Sigmoid colon (tissue), 7 donors: ENCODE measurements at regions of chr5 and their contacts with region 1.

Region 1: DNA sequence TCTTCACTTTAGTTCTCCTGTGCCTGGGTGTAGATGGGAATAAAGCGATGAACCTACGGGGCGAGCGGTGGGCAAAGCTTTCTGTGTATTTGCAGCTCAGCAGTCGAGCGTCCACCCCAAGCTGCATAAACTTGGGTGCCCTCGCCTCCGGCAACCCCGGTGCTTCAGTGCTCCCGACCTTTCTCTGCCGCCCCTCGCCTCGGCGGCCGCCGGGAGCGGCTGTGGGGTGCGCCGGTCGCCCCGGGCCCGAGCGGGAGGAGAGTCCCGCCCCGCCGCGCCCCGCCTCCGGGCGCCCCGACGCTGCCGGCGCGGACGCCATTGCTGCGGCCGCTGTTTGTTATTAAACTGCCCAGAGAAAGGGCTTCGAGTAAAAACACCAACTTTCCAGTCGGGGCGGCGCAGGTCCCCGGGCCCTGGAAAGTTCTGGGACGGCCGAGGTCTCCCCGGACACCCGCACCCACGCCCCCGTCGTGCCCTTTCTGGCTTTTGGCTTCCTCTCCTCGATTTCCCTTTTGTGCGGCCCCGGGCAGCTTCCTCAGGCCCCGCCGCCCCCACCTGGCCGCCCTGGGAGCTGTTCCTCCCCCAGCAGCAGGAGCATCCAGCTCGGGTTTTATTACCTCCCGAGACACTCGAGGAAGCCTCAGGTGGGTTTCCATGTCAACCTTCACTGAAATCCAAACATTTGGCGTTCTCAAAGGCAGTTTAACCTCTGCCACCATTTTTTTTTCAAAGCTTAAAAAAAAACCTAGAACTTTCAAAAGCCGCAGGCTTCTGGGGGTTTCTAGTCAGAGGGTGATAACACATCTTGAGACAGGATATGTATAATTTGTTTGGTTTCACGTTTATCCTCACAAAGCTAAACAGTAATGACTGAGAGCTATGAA is 334.3 kb downstream of the CWC27 start:
- DNase-seq: peak; percentile 85
- H3K4me3 ChIP-seq: peak overlapping the region; percentile 49 to 66 (median 59)
- H3K27ac ChIP-seq: peak overlapping the region; percentile 78 to 86 (median 82)
- H3K4me1 ChIP-seq: peaks cover 0 to 6% (median 5%) of the 10 kb centered on the region in 4 donors
- H3K27me3 ChIP-seq: no peaks in the 10 kb centered on the region
- CTCF ChIP-seq: peak in 2 of 4 experiments; percentile 41 to 42
- EP300 ChIP-seq: no peak
- POLR2A ChIP-seq: no peak

Region 2: GRCh38 chr5:64811050-64811640 is 291.9 kb before region 1 on chr5:
- intact Hi-C with region 1: loop called (anchors 10 kb)
- DNase-seq: no peak
- H3K4me3 ChIP-seq: no peak overlapping the region
- H3K27ac ChIP-seq: no peak overlapping the region
- H3K4me1 ChIP-seq: peaks cover 0 to 6% (median 0%) of the 10 kb centered on the region in 4 donors
- H3K27me3 ChIP-seq: no peaks in the 10 kb centered on the region
- CTCF ChIP-seq: peak; percentile 39 to 58 (median 50)
- EP300 ChIP-seq: no peak
- POLR2A ChIP-seq: no peak

Region 3: DNA sequence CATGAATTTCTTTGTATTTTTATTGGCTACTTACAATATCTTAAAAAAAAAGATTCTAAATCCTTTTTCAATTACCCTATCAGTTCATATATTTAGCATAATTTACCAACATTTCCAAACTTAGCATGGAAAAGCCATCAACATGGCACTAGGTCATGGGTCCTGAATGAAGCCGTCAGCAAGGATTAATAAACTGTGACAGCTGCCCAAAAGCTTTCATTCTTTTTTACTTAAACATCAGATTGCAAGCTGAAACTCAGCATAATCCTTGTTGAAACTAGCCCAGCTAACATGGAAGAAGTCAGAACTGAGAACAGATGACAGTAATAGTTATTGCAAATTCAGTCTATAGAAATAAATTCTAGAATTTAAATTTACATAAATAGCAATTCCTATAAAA is 168.8 kb after region 1 on chr5:
- intact Hi-C with region 1: no loop called
- DNase-seq: no peak
- H3K4me3 ChIP-seq: no peak overlapping the region
- H3K27ac ChIP-seq: no peak overlapping the region
- H3K4me1 ChIP-seq: no peaks in the 10 kb centered on the region
- H3K27me3 ChIP-seq: no peaks in the 10 kb centered on the region
- CTCF ChIP-seq: no peak
- EP300 ChIP-seq: no peak
- POLR2A ChIP-seq: no peak